ENCODE measurements at regions of chr4 and their contacts with region 1.

Region 1: DNA sequence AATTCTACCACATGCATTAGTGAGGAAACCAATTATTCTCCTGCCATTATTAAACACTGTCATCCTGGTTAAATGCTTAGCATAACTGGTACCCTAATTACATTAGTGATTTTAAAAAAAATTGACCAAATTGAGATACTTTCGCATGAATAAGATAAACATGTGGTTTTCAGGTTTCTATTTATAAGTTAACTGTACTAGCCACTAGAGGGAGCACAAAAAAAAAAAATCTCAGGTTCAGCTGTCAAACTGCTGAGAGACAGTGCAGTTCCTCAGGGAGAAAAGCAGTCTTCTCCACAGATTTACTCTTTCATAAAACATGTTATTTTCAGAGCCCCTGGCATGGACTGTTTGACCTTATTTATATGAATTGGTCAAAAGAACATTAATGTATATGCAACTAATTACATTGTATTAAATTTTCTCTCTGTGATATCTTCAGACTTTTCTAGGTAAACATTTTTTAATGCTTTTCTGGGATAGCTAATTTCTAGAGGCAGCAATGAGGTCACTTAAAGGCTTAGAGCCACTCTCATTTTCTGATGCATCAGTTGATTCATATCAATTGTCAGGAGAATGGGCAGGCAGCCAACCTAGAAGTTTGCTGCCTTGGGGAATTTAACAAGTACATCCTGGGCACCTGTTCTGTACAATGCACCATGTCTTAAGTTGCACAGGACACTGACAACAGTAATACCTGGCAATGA is 167.5 kb downstream of the CDS1 start:
- DNase-seq: no peak
- H3K4me3 ChIP-seq: no peak overlapping the region
- CTCF ChIP-seq: no peak
- POLR2A ChIP-seq: no peak

Region 2: DNA sequence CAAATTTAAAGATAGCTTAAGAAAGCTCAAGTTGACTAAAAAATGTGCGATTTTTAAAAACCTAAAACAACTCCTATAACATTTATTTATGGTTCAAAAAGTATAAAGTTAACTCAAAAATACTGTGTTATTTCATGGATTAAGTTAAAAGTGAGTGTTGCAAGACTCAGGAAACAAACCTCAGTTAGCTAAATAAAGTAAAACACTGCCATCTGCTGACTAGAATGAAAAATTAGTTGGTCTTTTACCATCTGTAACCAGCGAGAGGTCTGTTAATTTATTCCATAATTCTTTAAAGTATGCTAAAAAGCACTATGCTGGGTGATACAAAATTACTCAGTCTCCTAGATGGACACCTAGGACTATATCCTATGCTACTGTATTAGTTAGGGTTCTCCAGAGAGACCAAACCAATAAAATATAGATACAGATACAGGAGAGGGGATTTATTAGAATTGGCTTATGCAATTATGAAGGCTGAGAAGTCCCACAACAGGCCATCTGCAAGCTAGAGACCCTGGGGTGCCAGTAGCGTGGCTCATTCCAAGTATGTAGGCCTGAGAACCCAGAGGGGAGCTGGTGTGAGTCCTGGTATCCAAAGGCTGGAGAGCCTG is 221.0 kb after region 1 on chr4:
- intact Hi-C with region 1: loop called (anchors 2 kb)
- DNase-seq: no peak
- H3K4me3 ChIP-seq: no peak overlapping the region
- CTCF ChIP-seq: no peak
- POLR2A ChIP-seq: no peak